ENCODE measurements at regions of chr5 and their contacts with region 1.

Region 1: DNA sequence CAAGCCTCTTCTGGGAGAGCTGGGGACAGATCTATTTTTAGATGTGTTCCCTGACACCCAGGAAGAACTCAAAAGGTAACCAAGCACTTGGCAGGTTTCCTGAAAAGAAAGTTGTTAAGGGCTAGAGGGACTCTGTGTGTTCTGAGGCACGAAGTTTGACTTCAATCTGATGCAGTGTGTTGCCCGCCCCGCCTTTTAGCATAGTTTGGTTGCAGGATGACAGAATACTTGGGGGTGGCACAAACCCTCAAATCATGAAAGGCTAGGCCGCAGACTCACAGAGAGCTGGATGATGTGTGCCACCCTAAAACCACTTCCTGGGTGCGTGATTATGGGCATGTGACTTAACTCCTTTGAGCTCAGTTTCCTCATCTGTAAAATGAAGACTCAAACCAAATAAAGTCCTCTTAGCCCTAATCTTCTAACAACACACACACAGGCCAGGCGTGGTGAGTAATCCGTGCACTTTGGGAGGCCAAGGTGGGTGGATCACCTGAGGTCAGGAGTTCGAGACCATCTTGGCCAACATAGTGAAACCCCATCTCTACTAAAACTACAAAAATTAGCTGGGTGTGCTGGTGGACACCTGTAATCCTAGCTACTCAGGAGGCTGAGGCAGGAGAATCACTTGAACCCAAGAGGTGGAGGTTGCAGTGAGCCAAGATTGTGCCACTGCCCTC is 12.8 kb upstream of the NDFIP1 start:
- DNase-seq: peak; percentile 49 to 96 (median 88)
- ATAC-seq: peak; percentile 85 to 92
- H3K4me3 Mint-ChIP-seq: peak overlapping the region; percentile 48 to 85 (median 64)
- H3K27ac Mint-ChIP-seq: peak overlapping the region; percentile 82 to 99 (median 96)
- H3K4me1 Mint-ChIP-seq: peaks cover 21 to 69% (median 63%) of the 10 kb centered on the region in 4 donors
- H3K27me3 Mint-ChIP-seq: no peaks in the 10 kb centered on the region

Region 2: GRCh38 chr5:141940695-141941271 is 155.0 kb before region 1 on chr5:
- POLR2A ChIA-PET with region 1: no interaction called
- DNase-seq: no peak
- ATAC-seq: peak in 1 of 2 donors; percentile 14
- H3K4me3 Mint-ChIP-seq: no peak overlapping the region
- H3K27ac Mint-ChIP-seq: peak overlapping the region in 9 of 10 donors; percentile 43 to 89 (median 85)
- H3K4me1 Mint-ChIP-seq: peaks cover 0 to 9% (median 2%) of the 10 kb centered on the region in 4 donors
- H3K27me3 Mint-ChIP-seq: no peaks in the 10 kb centered on the region

Region 3: GRCh38 chr5:142032747-142033631 is 62.8 kb before region 1 on chr5:
- POLR2A ChIA-PET with region 1: interaction called, 17 read pairs
- DNase-seq: no peak
- ATAC-seq: no peak
- H3K4me3 Mint-ChIP-seq: peak overlapping the region in 4 of 10 donors; percentile 24 to 60 (median 43)
- H3K27ac Mint-ChIP-seq: peak overlapping the region in 7 of 10 donors; percentile 24 to 97 (median 87)
- H3K4me1 Mint-ChIP-seq: peaks cover 10 to 23% (median 16%) of the 10 kb centered on the region in 4 donors
- H3K27me3 Mint-ChIP-seq: peaks cover 0 to 9% (median 0%) of the 10 kb centered on the region in 5 donors

Measured in naive thymus-derived CD8-positive, alpha-beta T cell (primary cell).